Psoas muscle (tissue), 8 donors: ENCODE measurements at regions of chr1 and their contacts with region 1.

Region 1: GRCh38 chr1:75233302-75233929 is 99.2 kb downstream of the LHX8 start:
- DNase-seq: no peak
- ATAC-seq: peak in 3 of 4 donors; percentile 68 to 86 (median 75)
- H3K4me3 ChIP-seq: no peak overlapping the region
- H3K27ac ChIP-seq: no peak overlapping the region
- H3K4me1 ChIP-seq: no peaks in the 10 kb centered on the region
- H3K27me3 ChIP-seq: no peaks in the 10 kb centered on the region
- CTCF ChIP-seq: peak; percentile 69

Region 2: GRCh38 chr1:75625795-75626194 is 392.4 kb after region 1 on chr1:
- intact Hi-C with region 1: loop called in 1 of 2 experiments (anchors 10 kb)
- DNase-seq: no peak
- ATAC-seq: no peak
- H3K4me3 ChIP-seq: no peak overlapping the region
- H3K27ac ChIP-seq: no peak overlapping the region
- H3K4me1 ChIP-seq: no peaks in the 10 kb centered on the region
- H3K27me3 ChIP-seq: peaks cover 0 to 2% (median 0%) of the 10 kb centered on the region in 3 donors
- CTCF ChIP-seq: no peak

Region 3: DNA sequence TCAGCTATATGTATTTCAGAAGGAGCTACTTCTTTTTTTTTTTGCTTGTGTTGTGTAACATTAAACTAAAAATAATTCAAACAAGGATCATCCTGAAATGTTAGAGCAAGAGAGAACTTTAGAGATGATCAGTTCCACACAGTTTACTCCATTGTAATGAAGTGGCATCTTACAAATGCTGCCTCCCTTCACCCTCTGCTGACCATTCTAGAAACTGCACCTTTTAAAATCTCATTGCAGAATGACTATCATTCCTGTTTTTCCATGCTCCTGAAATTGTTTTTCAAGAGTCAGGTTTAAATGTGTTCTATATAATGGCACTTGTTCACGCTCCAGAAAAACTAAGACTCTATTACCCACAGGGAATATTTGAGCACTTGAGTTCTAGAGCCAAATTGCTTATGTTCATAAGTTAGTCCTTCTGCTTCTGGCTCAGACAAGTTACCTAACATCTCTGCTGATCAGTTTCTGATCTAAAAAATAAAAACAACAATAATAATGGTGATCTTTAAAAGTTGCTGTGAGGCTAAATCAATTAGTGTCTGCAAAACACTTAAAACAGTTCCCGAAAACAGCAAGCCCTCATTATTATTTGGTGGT is 399.0 kb after region 1 on chr1:
- intact Hi-C with region 1: loop called (anchors 2 to 10 kb)
- DNase-seq: no peak
- ATAC-seq: peak in 2 of 4 donors; percentile 58 to 64
- H3K4me3 ChIP-seq: no peak overlapping the region
- H3K27ac ChIP-seq: no peak overlapping the region
- H3K4me1 ChIP-seq: no peaks in the 10 kb centered on the region
- H3K27me3 ChIP-seq: no peaks in the 10 kb centered on the region
- CTCF ChIP-seq: peak; percentile 70